PC-3 (cell line): ENCODE measurements at regions of chr7 and their contacts with region 1.

Region 1: DNA sequence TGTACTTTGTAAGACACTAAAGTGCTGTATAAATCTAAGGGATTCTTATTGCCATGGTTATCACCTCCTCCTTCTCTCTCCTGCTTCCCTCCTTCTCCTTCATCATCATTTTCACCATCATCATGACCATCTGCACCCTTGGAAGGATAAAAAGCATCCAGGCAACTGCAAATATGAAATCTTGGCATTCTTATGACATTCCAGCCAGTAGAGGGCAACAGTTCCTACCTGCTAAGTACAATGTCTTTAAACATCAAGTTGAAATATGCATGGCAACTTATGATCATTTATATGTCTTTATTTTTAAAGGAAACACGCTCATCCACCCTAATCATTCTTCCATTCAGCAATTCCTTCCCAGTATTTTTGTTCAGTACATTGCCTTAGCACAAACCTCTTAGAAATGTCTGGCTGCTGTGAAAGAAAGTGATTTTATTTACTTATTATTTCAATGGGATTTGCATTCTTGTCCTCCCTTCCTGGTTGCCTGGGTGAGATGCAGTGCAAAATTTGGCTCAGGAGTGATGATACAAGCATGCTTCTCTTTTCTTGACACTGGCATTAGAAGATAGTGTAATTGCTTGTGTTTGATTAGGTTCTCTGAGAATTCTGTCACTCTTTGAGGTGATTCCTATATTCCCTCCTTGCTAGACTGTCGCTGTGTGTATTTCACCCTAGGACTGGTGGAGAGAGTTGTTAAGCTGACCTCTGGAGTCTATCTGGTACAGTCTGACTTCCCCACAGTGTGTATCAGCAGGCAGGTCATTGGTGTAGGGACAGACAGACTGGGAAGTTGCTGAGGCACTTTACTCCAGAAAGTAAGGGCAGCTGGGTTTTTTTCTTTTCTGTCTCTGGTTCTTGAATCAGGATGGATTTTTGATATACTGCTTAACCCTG is 188.5 kb upstream of the BMPER start:
- DNase-seq: peak; percentile 78
- ATAC-seq: peak; percentile 58
- H3K4me3 ChIP-seq: no peak overlapping the region
- H3K27ac ChIP-seq: no peak overlapping the region
- H3K4me1 ChIP-seq: peaks cover under 1% of the 10 kb centered on the region; the same call in 1 of the 2 replicates
- H3K27me3 ChIP-seq: no peaks in the 10 kb centered on the region
- CTCF ChIP-seq: peak; percentile 85

Region 2: DNA sequence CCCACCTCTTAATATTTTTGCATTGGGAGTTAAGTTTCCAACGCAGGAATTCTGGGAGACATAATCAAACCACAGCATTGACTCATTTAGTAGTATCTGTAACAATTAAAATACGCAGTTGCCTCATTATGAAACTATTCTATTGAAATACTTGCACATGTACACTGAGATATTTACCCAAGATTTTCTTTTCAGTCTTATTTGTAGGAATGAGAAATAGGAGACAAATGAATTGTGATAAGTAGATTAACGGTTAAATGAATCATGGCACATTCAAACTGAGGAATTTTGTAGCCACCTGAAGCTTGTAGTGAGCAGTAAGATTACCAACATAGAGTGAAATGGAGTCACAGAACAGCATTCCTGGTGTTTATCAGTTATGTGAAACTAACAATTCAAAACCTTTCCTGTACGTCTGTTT is 625.7 kb before region 1 on chr7:
- CTCF ChIA-PET with region 1: no interaction called
- POLR2A ChIA-PET with region 1: no interaction called
- intact Hi-C with region 1: no loop called
- DNase-seq: peak; percentile 40
- ATAC-seq: peak; percentile 9; the same call in 1 of the 2 replicates
- H3K4me3 ChIP-seq: no peak overlapping the region
- H3K27ac ChIP-seq: no peak overlapping the region
- H3K4me1 ChIP-seq: peaks cover 8% of the 10 kb centered on the region; the same call in 1 of the 2 replicates
- H3K27me3 ChIP-seq: no peaks in the 10 kb centered on the region
- CTCF ChIP-seq: no peak

Region 3: DNA sequence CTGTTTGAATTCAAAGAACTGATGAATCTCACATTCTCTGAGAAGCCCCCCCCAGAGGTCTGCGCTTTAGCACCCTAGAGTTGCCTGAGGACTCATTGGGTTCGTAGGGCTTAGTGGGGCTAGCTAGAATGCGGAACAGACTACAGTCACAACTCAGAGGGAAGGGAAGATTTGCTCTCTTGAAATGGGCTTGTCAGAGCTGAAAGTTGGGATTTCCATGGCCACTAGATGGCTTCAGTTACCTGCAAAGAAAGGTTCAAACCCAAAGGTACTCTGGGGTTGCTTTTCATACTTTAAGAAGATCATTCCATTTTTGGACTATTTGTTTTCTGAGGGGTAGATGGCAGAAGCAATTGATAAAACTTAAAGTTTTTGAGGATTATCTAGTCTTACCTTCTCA is 382.5 kb before region 1 on chr7:
- CTCF ChIA-PET with region 1: no interaction called
- POLR2A ChIA-PET with region 1: no interaction called
- intact Hi-C with region 1: no loop called
- DNase-seq: peak; percentile 58
- ATAC-seq: peak; percentile 74
- H3K4me3 ChIP-seq: no peak overlapping the region
- H3K27ac ChIP-seq: no peak overlapping the region
- H3K4me1 ChIP-seq: no peaks in the 10 kb centered on the region
- H3K27me3 ChIP-seq: no peaks in the 10 kb centered on the region
- CTCF ChIP-seq: peak; percentile 75

Region 4: GRCh38 chr7:33554046-33554445 is 162.8 kb before region 1 on chr7:
- CTCF ChIA-PET with region 1: no interaction called
- POLR2A ChIA-PET with region 1: no interaction called
- intact Hi-C with region 1: no loop called
- DNase-seq: no peak
- ATAC-seq: no peak
- H3K4me3 ChIP-seq: no peak overlapping the region
- H3K27ac ChIP-seq: no peak overlapping the region
- H3K4me1 ChIP-seq: no peaks in the 10 kb centered on the region
- H3K27me3 ChIP-seq: no peaks in the 10 kb centered on the region
- CTCF ChIP-seq: no peak

Region 5: GRCh38 chr7:33669251-33669670 is 47.6 kb before region 1 on chr7:
- CTCF ChIA-PET with region 1: no interaction called
- POLR2A ChIA-PET with region 1: no interaction called
- intact Hi-C with region 1: loop called (anchors 2 kb)
- DNase-seq: peak; percentile 77
- ATAC-seq: peak; percentile 90
- H3K4me3 ChIP-seq: peak overlapping the region; percentile 3; the same call in 1 of the 2 replicates
- H3K27ac ChIP-seq: peak overlapping the region; percentile 64
- H3K4me1 ChIP-seq: peaks cover 24% of the 10 kb centered on the region
- H3K27me3 ChIP-seq: no peaks in the 10 kb centered on the region
- CTCF ChIP-seq: no peak

Region 6: DNA sequence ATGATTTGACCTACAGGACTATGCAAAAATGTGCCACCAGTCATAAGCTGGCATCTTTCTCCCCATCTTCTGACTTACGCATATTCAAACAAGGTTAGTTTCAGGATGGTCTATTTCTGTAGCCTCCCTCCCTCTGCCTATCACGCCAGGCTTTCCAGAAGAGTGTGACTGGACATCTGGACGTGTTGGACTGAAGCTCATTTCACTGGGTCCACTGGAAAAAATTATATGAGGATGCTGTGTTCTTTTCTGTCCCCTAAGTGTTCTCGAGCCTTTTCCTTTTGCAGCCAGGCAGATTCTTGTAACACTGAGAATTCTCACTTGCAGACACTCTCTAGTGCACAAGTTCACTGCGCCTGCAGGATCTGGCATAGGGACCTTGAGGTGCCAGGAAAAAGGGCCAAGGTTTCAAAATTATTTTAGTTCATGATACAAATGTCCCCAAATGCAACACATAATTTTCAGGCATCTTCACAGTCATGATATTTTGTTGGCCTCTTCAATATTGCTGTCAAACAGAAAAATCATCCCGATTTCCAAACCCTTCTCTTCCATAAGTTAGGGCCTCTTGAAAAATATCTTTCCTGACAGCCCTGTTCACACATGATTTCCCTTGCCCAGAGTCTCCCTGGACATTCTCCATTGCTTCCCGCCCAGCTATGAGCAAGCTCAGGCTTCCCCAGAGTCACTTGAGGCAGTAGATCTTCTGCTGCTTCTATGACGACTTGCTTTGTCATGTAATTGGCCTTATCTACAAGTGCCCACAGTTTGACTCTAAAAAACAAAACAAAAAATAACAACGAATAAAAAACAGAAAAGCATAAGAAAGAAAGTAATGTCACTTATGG is 358.9 kb after region 1 on chr7:
- CTCF ChIA-PET with region 1: no interaction called
- POLR2A ChIA-PET with region 1: no interaction called
- intact Hi-C with region 1: no loop called
- DNase-seq: no peak
- ATAC-seq: no peak
- H3K4me3 ChIP-seq: no peak overlapping the region
- H3K27ac ChIP-seq: no peak overlapping the region
- H3K4me1 ChIP-seq: peaks cover 7% of the 10 kb centered on the region
- H3K27me3 ChIP-seq: no peaks in the 10 kb centered on the region; the same call in 1 of the 2 replicates
- CTCF ChIP-seq: no peak